Activated CD8-positive, alpha-beta T cell treated with anti-CD3 and anti-CD28 coated beads for 36 hours (primary cell): ENCODE measurements at regions of chr1 and their contacts with region 1.

Region 1: GRCh38 chr1:154157520-154158306 is 2.8 kb upstream of the NUP210L start:
- DNase-seq: peak; percentile 87
- ATAC-seq: peak; percentile 95
- H3K4me3 Mint-ChIP-seq: peak overlapping the region; percentile 61
- H3K27ac Mint-ChIP-seq: peak overlapping the region; percentile 96
- H3K4me1 Mint-ChIP-seq: peaks cover 74% of the 10 kb centered on the region
- H3K27me3 Mint-ChIP-seq: no peaks in the 10 kb centered on the region
- CTCF ChIP-seq: no peak

Region 2: DNA sequence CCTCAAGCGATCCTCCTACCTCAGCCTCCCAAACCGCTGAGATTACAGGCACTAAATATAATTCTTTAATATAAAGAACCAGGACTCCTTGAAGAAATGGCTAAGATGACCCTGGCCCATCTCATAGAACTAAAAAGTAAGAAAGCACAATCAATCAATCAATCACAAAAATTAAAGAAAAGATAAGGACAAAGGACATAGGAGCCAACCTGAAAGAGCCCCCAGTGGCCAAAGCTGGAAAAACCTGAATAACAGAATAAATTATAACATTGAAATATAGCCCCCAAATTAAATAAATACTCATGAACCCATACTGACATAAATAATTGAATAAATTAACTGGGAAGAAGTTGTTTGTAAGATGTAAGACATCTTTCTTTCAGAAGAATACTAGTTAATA is 11.7 kb before region 1 on chr1:
- CTCF ChIA-PET with region 1: interaction called, 17 read pairs
- POLR2A ChIA-PET with region 1: interaction called, 4 read pairs
- intact Hi-C with region 1: no loop called
- DNase-seq: peak; percentile 38
- ATAC-seq: no peak
- H3K4me3 Mint-ChIP-seq: no peak overlapping the region
- H3K27ac Mint-ChIP-seq: no peak overlapping the region
- H3K4me1 Mint-ChIP-seq: peaks cover 11% of the 10 kb centered on the region
- H3K27me3 Mint-ChIP-seq: no peaks in the 10 kb centered on the region
- CTCF ChIP-seq: peak; percentile 58

Region 3: DNA sequence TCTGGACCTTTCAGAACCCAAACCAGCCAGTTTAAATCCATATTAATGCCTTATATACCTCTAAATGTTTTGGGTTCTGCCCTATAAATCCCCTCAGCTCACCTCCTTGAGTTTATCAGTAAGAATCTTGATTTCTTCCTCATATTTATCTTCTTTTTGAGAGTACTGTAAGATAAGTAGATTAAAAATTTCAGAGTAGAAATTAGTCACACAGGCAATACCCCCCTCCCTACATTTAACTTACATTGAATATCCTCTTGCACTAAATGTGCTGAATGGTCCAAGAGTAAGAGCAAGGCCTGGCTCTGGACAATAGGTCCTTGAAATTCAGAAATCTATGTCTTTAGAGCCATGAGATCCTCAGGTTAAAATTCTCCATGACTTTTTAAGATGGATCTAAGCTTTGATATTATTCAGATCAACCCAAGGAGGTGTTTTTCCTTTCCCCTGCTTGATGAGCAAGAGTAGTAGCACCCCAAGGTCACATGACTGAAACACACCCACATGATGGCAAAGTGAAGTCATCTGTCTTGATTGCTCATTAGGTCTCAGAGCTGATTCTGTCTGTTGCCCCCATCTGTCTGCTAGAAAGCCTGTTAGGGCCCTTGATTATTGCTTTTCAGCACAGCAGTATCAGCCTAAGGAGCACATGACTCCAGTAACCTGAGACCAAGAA is 13.0 kb after region 1 on chr1:
- CTCF ChIA-PET with region 1: interaction called, 6 read pairs
- POLR2A ChIA-PET with region 1: interaction called, 40 read pairs
- intact Hi-C with region 1: no loop called
- DNase-seq: peak; percentile 86
- ATAC-seq: peak; percentile 96
- H3K4me3 Mint-ChIP-seq: no peak overlapping the region
- H3K27ac Mint-ChIP-seq: peak overlapping the region; percentile 90
- H3K4me1 Mint-ChIP-seq: peaks cover 55% of the 10 kb centered on the region
- H3K27me3 Mint-ChIP-seq: no peaks in the 10 kb centered on the region
- CTCF ChIP-seq: no peak

Region 4: GRCh38 chr1:154183045-154183915 is 25.6 kb after region 1 on chr1:
- CTCF ChIA-PET with region 1: interaction called, 3 read pairs
- POLR2A ChIA-PET with region 1: interaction called, 13 read pairs
- intact Hi-C with region 1: no loop called
- DNase-seq: peak; percentile 97
- ATAC-seq: peak; percentile 74
- H3K4me3 Mint-ChIP-seq: peak overlapping the region; percentile 97
- H3K27ac Mint-ChIP-seq: peak overlapping the region; percentile 99
- H3K4me1 Mint-ChIP-seq: peaks cover 41% of the 10 kb centered on the region
- H3K27me3 Mint-ChIP-seq: no peaks in the 10 kb centered on the region
- CTCF ChIP-seq: no peak